Activated CD4-positive, alpha-beta T cell treated with anti-CD3 and anti-CD28 coated beads for 36 hours (primary cell): ENCODE measurements at regions of chr17 and their contacts with region 1.

Region 1: GRCh38 chr17:49390548-49391324 is 23.9 kb downstream of the PHB1 start:
- DNase-seq: no peak
- ATAC-seq: no peak
- H3K4me3 Mint-ChIP-seq: no peak overlapping the region
- H3K27ac Mint-ChIP-seq: peak overlapping the region; percentile 16
- H3K4me1 Mint-ChIP-seq: peaks cover 54% of the 10 kb centered on the region
- H3K27me3 Mint-ChIP-seq: no peaks in the 10 kb centered on the region

Region 2: GRCh38 chr17:49361902-49362722 is 28.6 kb before region 1 on chr17 and contains the start of gene ZNF652:
- CTCF ChIA-PET with region 1: interaction called, 11 read pairs
- POLR2A ChIA-PET with region 1: no interaction called
- intact Hi-C with region 1: loop called in 1 of 2 experiments (anchors 2 kb)
- DNase-seq: peak; percentile 93
- ATAC-seq: peak; percentile 57
- H3K4me3 Mint-ChIP-seq: peak within 1 kb of the TSS; percentile 92
- H3K27ac Mint-ChIP-seq: peak within 1 kb of the TSS; percentile 92
- H3K4me1 Mint-ChIP-seq: peaks cover 50% of the 10 kb centered on the region
- H3K27me3 Mint-ChIP-seq: peaks cover 1% of the 10 kb centered on the region
- total RNA-seq, gene ZNF652: 5.2 to 7.0 TPM

Region 3: GRCh38 chr17:49370971-49371834 is 19.5 kb before region 1 on chr17:
- CTCF ChIA-PET with region 1: interaction called, 11 read pairs
- POLR2A ChIA-PET with region 1: no interaction called
- intact Hi-C with region 1: loop called (anchors 1 kb)
- DNase-seq: no peak
- ATAC-seq: no peak
- H3K4me3 Mint-ChIP-seq: no peak overlapping the region
- H3K27ac Mint-ChIP-seq: no peak overlapping the region
- H3K4me1 Mint-ChIP-seq: no peaks in the 10 kb centered on the region
- H3K27me3 Mint-ChIP-seq: no peaks in the 10 kb centered on the region

Region 4: DNA sequence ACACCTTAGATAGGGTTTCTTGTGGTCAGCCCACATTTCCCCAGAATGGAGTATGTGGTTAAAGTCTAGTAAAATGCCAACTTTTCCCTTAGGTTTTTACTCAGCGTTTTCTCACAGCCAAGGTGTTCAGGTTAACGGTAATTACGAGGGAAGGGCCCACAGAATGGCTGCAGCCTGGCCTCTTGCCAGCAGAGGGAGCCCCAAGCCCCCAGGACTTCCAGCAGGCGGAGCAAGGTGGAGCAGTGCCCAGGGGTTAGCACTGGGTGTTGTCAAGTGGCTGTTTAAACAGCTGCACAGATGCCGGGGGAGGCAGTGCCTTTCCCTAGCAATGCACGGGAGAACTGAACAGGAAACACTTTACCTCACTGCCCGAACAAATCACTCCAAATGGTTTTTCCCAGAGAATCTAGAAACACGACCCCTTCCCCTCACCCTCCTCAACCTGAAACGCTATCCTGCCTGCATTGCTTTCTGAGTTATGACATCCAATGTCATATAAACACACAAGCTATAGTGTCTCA is 17.3 kb after region 1 on chr17:
- CTCF ChIA-PET with region 1: interaction called, 10 read pairs
- POLR2A ChIA-PET with region 1: no interaction called
- intact Hi-C with region 1: no loop called
- DNase-seq: peak; percentile 91
- ATAC-seq: peak; percentile 100
- H3K4me3 Mint-ChIP-seq: no peak overlapping the region
- H3K27ac Mint-ChIP-seq: no peak overlapping the region
- H3K4me1 Mint-ChIP-seq: peaks cover 34% of the 10 kb centered on the region
- H3K27me3 Mint-ChIP-seq: no peaks in the 10 kb centered on the region

Region 5: GRCh38 chr17:49471089-49471683 is 80.5 kb after region 1 on chr17:
- CTCF ChIA-PET with region 1: no interaction called
- POLR2A ChIA-PET with region 1: no interaction called
- intact Hi-C with region 1: no loop called
- DNase-seq: no peak
- ATAC-seq: no peak
- H3K4me3 Mint-ChIP-seq: no peak overlapping the region
- H3K27ac Mint-ChIP-seq: no peak overlapping the region
- H3K4me1 Mint-ChIP-seq: no peaks in the 10 kb centered on the region
- H3K27me3 Mint-ChIP-seq: peaks cover 47% of the 10 kb centered on the region